ENCODE measurements at regions of chr18 and their contacts with region 1.

Region 1: GRCh38 chr18:58529714-58530354 is 99.1 kb downstream of the ALPK2 start:
- DNase-seq: peak; percentile 74
- ATAC-seq: peak; percentile 72

Region 2: DNA sequence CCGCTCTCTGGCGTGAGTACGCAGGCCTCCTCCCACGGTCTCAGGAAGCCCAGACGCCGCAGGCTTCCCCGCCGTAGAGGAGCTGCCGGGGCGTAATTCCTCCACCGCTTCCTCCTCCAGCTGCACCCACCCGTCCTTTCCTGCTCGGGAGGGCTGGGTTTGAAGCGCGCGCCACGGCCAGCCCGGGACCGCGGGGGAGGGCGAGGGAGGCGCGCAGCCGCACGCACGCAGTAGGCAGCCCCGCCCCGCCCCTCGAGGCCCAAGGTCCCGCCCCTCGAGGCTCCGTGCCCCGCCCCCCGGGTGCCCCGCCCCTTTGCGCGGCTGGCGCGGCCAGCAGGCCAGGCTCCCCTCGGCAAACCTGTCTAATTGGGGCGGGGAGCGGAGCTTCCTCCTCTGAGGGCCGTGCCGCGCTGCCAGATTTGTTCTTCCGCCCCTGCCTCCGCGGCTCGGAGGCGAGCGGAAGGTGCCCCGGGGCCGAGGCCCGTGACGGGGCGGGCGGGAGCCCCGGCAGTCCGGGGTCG is 141.3 kb after region 1 on chr18 and contains the start of gene MALT1:
- intact Hi-C with region 1: loop called (anchors 10 kb)
- DNase-seq: peak; percentile 95
- ATAC-seq: peak; percentile 98
- total RNA-seq, gene MALT1: 10.2 TPM

Region 3: DNA sequence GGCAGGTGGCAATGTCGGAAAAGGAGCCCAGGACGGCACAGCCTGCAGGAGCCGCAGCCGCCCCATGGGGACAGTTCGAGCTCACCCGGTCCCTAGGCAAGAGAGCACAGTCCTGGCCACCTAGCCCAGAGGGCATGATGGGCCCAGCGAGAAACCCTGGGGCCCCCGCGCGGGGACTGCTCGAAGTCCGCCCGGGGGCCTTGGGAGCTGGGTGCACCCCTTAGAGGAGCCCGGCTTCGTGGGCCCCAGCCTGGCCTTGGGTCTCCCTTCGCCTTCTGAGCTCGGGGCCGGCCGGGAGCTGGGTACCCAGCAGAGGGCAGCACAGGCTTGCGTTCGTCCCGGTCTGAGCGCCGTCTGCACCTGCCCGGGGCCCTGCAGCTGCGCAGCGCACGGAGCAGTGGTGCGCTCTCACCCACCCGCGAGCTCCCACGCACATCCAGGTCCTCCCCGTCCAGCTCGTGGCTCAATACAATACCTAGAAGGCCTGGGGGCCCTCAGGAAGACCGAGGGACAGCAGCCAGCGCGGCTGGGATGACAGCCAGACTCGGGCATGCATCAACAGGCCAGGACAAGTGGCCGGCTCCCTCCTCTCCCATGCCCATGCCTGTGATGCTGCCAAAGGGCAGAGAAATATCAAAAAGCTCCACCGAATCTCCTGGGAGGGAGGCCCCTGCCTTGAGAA is 238.6 kb after region 1 on chr18:
- intact Hi-C with region 1: loop called (anchors 2 kb)
- DNase-seq: peak; percentile 82
- ATAC-seq: peak; percentile 94

Region 4: DNA sequence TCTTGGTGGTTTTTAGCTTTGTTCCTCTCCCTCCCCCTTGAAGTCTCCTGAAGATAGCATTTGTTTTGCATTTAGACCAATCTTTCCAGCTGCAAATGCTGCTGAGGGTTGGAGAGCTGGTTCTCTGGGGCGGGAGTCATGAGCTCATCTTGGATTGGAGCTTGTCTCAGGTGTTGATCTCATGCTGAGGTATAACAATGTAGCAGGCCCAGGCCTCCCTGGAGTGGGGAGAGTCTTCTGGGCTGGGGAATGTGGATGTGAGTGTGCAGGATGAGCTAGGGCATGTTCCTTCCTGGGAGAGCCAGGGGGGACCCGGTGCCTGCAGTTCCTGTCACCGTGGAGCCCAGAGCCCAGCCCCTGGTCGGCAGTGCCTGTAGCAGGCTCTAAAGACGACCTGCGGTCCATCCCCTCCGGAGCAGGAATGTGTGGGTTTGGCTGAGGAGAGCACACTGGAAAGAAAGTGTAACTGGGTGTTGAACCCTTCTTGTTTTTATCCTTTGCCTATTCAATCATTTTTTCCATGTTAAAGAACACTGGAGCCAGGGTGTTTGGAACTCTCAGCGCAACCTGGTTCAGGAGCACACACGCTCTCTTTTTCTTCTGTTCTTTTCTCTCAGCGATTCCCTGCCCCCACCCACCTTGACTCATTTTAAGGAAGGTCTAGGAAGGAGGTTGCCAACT is 337.6 kb after region 1 on chr18:
- intact Hi-C with region 1: no loop called
- DNase-seq: no peak
- ATAC-seq: no peak

Measured in Right ventricle myocardium superior (tissue), 1 donor.